HEK293 (cell line): ENCODE measurements at regions of chr18 and their contacts with region 1.

Region 1: GRCh38 chr18:57959278-57959677 is 84.7 kb upstream of the NEDD4L start:
- H3K4me3 ChIP-seq: no peak overlapping the region
- H3K27ac ChIP-seq: no peak overlapping the region
- H3K4me1 ChIP-seq: peaks cover 8% of the 10 kb centered on the region; the same call in 1 of the 2 replicates
- CTCF ChIP-seq: no peak

Region 2: DNA sequence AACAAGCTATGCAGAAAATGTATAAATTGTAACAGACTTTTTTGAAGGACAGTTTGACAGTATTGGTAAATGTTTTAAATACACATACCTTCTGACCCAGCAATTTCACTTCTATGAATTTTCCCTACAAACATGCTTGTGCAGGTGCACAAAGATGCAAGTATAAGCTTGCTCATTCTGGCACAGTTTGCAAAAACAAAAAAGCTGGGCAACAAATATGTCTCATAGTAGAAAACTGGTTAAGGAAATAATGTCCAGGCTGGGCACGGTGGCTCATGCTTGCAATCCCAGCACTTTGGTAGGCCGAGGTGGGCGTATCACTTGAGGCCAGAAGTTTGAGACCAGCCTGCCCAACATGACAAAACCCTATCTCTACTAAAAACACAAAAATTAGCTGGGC is 12.2 kb before region 1 on chr18:
- CTCF ChIA-PET with region 1: interaction called, 10 read pairs
- POLR2A ChIA-PET with region 1: no interaction called
- H3K4me3 ChIP-seq: no peak overlapping the region
- H3K27ac ChIP-seq: no peak overlapping the region
- H3K4me1 ChIP-seq: peaks cover 6% of the 10 kb centered on the region; the same call in 1 of the 2 replicates
- CTCF ChIP-seq: no peak

Region 3: GRCh38 chr18:57970356-57971080 is 11.2 kb after region 1 on chr18:
- CTCF ChIA-PET with region 1: interaction called, 15 read pairs
- POLR2A ChIA-PET with region 1: no interaction called
- H3K4me3 ChIP-seq: no peak overlapping the region
- H3K27ac ChIP-seq: no peak overlapping the region
- H3K4me1 ChIP-seq: peaks cover 5% of the 10 kb centered on the region
- CTCF ChIP-seq: no peak

Region 4: DNA sequence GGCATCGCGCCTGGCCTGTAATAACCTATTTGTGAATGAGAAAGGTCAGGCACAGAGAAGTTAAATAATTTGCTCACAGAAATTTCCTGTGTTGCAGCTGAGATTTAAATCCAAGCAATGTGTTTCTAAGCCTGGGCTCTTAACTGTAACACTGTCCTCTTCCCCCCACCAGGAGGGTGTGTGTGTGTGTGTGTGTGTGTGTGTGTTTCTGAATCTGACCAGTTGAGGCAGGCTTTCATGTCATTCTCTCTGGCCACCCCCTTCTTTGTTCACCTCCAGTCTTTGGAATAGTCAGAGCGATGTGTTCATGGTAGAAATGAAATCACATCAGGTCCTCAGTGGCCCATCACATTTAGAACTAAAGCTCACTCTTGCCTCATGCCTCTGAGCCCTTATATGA is 165.9 kb after region 1 on chr18:
- CTCF ChIA-PET with region 1: interaction called, 24 read pairs
- POLR2A ChIA-PET with region 1: no interaction called
- H3K4me3 ChIP-seq: no peak overlapping the region
- H3K27ac ChIP-seq: no peak overlapping the region
- H3K4me1 ChIP-seq: no peaks in the 10 kb centered on the region
- CTCF ChIP-seq: peak; percentile 72

Region 5: DNA sequence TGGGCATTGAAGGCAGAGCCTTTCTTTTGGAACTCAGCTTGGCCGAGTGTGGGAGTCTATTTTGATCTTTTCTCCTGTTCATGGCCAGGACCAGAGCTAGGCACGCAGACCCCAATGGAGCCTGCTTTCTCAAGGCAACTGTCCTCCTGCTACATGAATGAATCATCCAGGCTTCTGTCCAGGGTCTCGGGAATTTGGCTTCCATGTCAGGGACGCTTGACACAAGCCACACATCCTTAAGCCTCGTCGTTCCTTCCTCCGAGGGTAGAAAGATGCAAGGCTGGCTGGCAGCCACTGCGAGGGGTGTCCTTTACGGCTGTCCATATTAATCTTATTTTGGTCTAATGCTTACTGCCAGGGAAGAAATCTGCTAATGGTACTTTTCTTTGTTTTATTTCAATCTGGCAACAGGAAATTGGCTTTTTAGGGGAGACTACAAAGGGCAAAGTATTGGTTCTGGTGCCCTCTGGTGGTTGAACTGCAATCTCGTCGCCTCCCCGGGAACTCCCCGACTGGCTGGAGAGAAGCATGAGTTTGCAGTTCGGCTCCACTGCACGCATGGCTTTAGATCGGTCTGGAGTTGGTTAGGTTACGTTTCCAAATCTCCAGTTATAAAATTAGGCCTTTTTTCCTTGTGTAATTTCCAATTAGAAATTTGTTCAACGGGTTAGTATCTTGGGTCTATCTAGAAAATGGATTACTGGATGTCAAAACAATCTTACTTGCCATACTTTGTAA is 534.4 kb after region 1 on chr18:
- CTCF ChIA-PET with region 1: interaction called, 14 read pairs
- POLR2A ChIA-PET with region 1: no interaction called
- H3K4me3 ChIP-seq: no peak overlapping the region
- H3K27ac ChIP-seq: no peak overlapping the region
- H3K4me1 ChIP-seq: no peaks in the 10 kb centered on the region
- CTCF ChIP-seq: peak; percentile 62; the same call in 1 of the 2 replicates